Common myeloid progenitor, CD34-positive (primary cell): ENCODE measurements at regions of chr7 and their contacts with region 1.

Region 1: DNA sequence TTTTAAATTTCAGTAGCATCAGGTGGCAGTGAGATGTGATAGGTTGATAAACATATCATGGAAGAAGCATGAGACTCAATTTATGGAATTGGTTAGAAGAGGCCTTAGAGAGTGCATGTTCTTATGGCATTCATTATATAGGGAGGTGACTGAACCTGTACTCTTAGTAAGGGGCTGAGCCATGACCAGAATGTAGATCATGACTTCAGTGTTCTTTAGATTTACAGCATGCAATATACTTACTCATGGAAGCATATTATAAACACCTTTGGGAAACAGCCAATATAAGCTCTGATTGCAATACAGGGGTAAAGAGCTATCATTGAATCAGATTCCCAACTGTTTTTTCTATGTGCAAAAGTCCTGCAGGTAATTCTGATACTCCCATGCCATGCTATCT is 50.2 kb downstream of the NT5C3A start:
- DNase-seq: no peak
- H3K4me3 ChIP-seq: no peak overlapping the region
- H3K27ac ChIP-seq: no peak overlapping the region
- H3K4me1 ChIP-seq: peaks cover 0 to 4% (median 0%) of the 10 kb centered on the region in 4 experiments
- H3K27me3 ChIP-seq: no peaks in the 10 kb centered on the region

Region 2: GRCh38 chr7:32126843-32127242 is 885.5 kb before region 1 on chr7:
- CTCF ChIA-PET with region 1: no interaction called
- POLR2A ChIA-PET with region 1: no interaction called
- DNase-seq: no peak
- H3K4me3 ChIP-seq: no peak overlapping the region
- H3K27ac ChIP-seq: no peak overlapping the region
- H3K4me1 ChIP-seq: no peaks in the 10 kb centered on the region
- H3K27me3 ChIP-seq: no peaks in the 10 kb centered on the region

Region 3: DNA sequence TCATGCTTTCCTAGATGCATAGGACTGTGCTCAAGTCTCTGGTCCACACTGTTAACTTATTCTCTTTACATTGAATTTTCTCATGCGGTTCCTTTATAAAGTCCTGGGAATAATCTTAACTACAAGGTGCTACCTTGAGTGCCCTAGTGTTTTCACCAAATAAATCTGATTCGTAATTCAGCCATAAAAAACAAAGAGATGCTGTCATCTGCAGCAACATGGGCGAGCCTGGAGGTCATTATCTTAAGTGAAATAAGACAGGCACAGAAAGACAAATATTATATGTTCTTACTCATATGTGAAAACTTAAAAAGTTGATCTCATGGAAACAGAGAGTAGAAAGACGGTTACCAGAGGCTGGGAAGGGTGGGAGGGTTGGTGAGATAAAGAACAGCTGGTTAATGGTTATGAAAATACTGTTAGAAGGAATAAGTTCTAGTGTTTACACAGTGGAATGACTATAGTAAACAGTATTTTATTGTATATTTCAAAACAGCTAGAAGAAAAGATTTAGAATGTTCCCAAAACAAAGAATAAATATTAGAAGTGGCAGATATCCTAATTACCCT is 11.9 kb after region 1 on chr7:
- CTCF ChIA-PET with region 1: interaction called, 13 read pairs
- POLR2A ChIA-PET with region 1: no interaction called
- DNase-seq: no peak
- H3K4me3 ChIP-seq: no peak overlapping the region
- H3K27ac ChIP-seq: no peak overlapping the region
- H3K4me1 ChIP-seq: no peaks in the 10 kb centered on the region
- H3K27me3 ChIP-seq: no peaks in the 10 kb centered on the region